Common myeloid progenitor, CD34-positive (primary cell): ENCODE measurements at regions of chr20 and their contacts with region 1.

Region 1: DNA sequence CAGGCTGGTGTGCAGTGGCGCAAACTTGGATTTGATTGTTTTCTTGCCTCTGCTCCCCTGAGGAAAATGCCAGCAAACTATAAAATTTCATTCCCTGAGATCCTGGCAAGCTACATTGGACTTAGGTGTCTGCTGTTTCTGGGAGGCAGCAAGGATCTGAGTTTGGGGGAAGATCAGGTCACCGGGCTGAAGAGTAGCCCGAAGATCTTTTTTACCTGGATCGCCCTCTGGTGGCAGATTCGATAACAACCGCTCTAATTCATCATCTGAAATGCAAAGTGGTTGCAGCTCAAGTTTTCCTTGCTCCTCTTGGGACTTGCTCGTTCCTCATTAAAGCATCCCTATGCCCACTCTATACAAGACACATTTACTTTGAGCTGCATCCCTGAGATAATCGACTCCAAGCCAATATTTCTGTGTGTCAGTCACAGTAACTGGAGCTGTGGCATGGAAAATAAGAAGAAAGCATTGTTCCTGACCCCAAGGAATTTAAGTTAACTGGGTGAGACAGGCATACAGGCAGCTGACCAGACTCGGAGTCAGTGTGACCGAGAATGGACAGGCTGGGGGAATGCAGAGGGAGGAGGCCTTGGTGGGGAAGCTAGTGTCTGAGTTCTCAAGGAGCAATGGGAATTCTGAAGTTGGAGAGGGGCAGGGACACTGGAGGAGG is 131.8 kb upstream of the PROKR2 start:
- DNase-seq: peak; percentile 41 to 58 (median 49)
- H3K4me3 ChIP-seq: no peak overlapping the region
- H3K27ac ChIP-seq: no peak overlapping the region
- H3K4me1 ChIP-seq: no peaks in the 10 kb centered on the region
- H3K27me3 ChIP-seq: peaks cover 0 to 10% (median 0%) of the 10 kb centered on the region in 5 experiments

Region 2: DNA sequence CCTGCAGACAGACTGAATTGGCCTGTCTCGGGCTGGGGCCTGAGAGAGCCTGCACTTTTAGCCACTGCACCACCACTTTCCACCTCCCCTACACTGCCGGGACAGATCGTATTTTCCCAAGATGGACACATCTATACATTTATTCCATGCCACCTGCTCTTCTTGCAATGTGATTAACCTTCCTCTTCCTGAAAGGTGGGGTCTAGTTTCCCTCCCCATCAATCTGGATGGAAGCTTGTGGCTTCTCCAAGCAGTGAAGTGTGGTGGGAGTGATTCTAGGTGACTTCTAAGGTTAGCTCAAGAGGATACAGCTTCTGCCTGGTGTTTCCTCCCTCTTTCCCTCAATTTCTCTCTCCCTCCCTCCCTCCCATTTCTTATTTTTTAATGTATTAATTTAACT is 18.5 kb after region 1 on chr20:
- CTCF ChIA-PET with region 1: no interaction called
- POLR2A ChIA-PET with region 1: no interaction called
- DNase-seq: no peak
- H3K4me3 ChIP-seq: no peak overlapping the region
- H3K27ac ChIP-seq: no peak overlapping the region
- H3K4me1 ChIP-seq: peaks cover 0 to 10% (median 4%) of the 10 kb centered on the region in 4 experiments
- H3K27me3 ChIP-seq: peaks cover 0 to 2% (median 0%) of the 10 kb centered on the region in 5 experiments

Region 3: GRCh38 chr20:5482791-5483190 is 34.2 kb after region 1 on chr20:
- CTCF ChIA-PET with region 1: interaction called, 10 read pairs
- POLR2A ChIA-PET with region 1: no interaction called
- DNase-seq: no peak
- H3K4me3 ChIP-seq: no peak overlapping the region
- H3K27ac ChIP-seq: no peak overlapping the region
- H3K4me1 ChIP-seq: peaks cover 3 to 23% (median 15%) of the 10 kb centered on the region in 4 experiments
- H3K27me3 ChIP-seq: no peaks in the 10 kb centered on the region

Region 4: DNA sequence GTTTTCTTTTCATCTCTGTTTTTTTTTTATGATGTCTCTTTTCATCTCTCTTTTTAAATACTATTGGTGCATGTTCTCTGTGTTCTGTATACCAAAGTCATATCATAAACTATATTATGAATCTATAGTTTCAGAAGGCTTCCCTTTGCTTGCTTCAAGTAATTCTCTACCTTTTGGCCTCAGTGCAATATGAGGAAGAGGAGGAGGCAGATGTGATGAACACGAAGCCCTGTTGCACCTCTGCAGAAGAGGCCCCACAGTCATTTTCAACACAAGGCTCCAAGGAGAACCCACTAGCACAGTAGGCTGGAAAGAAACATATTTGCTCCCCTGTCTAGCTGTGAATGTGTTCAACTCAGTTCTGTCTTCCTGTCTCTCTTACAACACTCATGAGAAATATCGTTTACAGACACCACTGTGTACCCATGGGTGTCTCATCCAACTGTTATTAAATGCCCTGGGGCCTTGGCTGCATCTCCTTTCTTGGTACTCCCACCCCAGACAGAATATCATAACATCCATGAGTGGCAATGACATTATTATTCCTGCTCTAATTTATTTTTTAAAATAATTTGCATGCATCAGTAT is 179.0 kb after region 1 on chr20:
- CTCF ChIA-PET with region 1: no interaction called
- POLR2A ChIA-PET with region 1: no interaction called
- DNase-seq: no peak
- H3K4me3 ChIP-seq: no peak overlapping the region
- H3K27ac ChIP-seq: no peak overlapping the region
- H3K4me1 ChIP-seq: no peaks in the 10 kb centered on the region
- H3K27me3 ChIP-seq: no peaks in the 10 kb centered on the region